Mammary epithelial cell (primary cell): ENCODE measurements at regions of chr16 and their contacts with region 1.

Region 1: GRCh38 chr16:9008601-9009260 is 45.0 kb upstream of the USP7 start:
- DNase-seq: peak; percentile 25
- H3K4me3 ChIP-seq: peak overlapping the region in 1 of 3 experiments; percentile 37
- H3K27ac ChIP-seq: no peak overlapping the region
- H3K4me1 ChIP-seq: peaks cover 3% of the 10 kb centered on the region
- H3K27me3 ChIP-seq: no peaks in the 10 kb centered on the region
- CTCF ChIP-seq: peak; percentile 65 to 91

Region 2: DNA sequence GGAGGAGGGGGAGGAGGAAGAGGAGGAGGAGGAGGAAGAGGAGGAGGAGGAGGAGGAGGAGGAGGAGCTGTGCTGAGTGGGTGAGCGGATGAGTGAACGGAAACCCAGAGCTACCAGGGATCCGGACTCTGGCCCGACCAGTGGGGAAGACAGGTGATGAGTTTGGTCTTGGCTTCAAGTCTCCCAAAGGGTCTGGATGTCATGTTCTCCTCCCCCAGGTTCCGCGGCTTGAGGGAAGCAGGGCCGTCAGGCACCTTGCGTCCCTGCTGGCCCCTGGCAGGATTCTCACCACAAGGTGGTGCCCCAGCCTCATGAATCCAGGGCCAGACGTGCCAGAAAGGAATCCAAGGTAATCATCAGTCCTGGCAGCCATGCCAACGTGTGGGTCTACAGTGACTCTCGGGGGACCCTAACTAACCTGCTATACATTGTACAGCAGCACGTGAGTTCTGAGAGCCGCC is 347.9 kb before region 1 on chr16:
- CTCF ChIA-PET with region 1: no interaction called
- dilution Hi-C with region 1: no loop called
- in situ Hi-C with region 1: no loop called
- intact Hi-C with region 1: loop called (anchors 10 kb)
- DNase-seq: peak; percentile 65
- H3K4me3 ChIP-seq: peak overlapping the region in 1 of 3 experiments; percentile 19
- H3K27ac ChIP-seq: no peak overlapping the region
- H3K4me1 ChIP-seq: no peaks in the 10 kb centered on the region
- H3K27me3 ChIP-seq: no peaks in the 10 kb centered on the region
- CTCF ChIP-seq: peak; percentile 54 to 84

Region 3: DNA sequence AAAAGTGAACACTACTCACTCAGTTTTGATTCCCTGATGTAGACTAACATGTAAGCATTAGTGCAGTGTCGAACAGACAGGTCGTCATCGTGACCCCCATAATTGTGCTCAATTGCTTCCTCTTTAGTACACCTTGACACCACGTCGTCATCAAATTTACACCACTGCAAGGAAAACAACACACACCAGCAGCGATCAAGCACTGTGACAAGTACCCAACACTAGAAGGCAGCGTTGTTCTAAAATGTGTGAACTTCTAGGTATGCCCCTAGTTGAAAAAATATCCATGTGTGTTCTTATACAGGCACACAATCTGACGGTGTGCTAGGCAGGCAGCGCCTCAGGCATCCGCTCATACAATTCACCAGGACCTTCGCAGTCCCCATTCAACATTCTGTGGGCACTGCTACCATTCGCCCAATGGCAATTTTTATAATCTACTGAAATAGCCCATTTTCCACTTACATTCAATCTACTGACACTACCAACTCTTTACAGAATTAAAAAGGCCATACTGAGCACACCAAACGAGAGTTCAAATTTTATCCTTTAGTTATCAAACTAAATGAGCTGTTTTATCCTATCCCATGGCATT is 103.5 kb before region 1 on chr16:
- CTCF ChIA-PET with region 1: no interaction called
- dilution Hi-C with region 1: no loop called
- in situ Hi-C with region 1: no loop called
- intact Hi-C with region 1: loop called (anchors 1 kb)
- DNase-seq: no peak
- H3K4me3 ChIP-seq: no peak overlapping the region
- H3K27ac ChIP-seq: no peak overlapping the region
- H3K4me1 ChIP-seq: no peaks in the 10 kb centered on the region
- H3K27me3 ChIP-seq: no peaks in the 10 kb centered on the region
- CTCF ChIP-seq: peak; percentile 32 to 36

Region 4: GRCh38 chr16:8998114-8998513 is 10.6 kb before region 1 on chr16:
- CTCF ChIA-PET with region 1: interaction called, 10 read pairs
- dilution Hi-C with region 1: no loop called
- in situ Hi-C with region 1: no loop called
- intact Hi-C with region 1: no loop called
- DNase-seq: peak; percentile 40
- H3K4me3 ChIP-seq: no peak overlapping the region
- H3K27ac ChIP-seq: no peak overlapping the region
- H3K4me1 ChIP-seq: no peaks in the 10 kb centered on the region
- H3K27me3 ChIP-seq: no peaks in the 10 kb centered on the region
- CTCF ChIP-seq: no peak

Region 5: DNA sequence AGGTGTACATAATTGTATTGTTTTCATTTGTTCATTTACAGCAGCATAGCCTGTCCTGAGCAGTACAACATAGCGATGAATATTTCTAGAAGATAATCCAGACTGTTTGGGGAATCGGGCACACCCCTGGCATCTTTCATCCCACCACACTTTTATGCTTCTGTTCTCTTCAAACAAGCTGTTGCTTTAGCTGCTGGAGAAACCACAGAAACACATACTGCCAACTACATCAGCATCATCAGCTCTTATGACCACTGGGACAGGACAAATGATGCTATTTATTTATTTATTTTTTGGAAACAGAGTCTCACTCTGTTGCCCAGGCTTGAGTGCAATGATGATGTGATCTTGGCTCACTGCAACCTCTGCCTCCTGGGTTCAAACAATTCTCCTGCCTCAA is 60.2 kb after region 1 on chr16:
- CTCF ChIA-PET with region 1: interaction called, 13 read pairs
- dilution Hi-C with region 1: no loop called
- in situ Hi-C with region 1: no loop called
- intact Hi-C with region 1: no loop called
- DNase-seq: peak; percentile 68
- H3K4me3 ChIP-seq: no peak overlapping the region
- H3K27ac ChIP-seq: peak overlapping the region; percentile 96
- H3K4me1 ChIP-seq: peaks cover 31% of the 10 kb centered on the region
- H3K27me3 ChIP-seq: no peaks in the 10 kb centered on the region
- CTCF ChIP-seq: no peak